ENCODE measurements at regions of chr1 and their contacts with region 1.

Region 1: DNA sequence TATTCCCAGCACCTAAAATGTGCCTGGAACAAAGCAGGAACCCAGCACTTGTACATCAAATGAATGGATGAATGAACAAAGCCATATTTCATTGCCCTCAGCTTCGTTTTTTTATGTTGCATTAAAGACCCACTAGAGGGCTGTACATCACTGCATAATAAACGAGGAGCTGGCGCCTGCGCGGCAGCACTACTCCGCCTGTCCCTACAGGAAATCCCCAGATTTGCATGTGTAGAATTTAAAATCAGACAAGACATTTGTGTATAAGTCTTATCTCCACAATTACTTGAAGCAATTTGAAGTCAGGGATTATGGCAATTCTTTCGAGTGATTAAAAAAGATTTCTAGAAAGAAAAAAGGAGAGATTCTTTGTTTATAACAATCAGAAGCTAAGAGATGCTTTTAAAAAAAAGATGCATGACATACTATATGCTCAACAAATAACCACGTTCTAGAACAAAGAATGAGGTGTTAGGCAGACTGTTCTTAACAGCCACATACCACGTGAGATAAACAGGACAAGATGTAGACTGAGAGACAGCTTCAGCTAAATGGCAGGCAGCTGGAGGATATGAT is 5.4 kb upstream of the NEK2 start:
- DNase-seq: peak; percentile 57 to 85 (median 80)
- H3K4me3 ChIP-seq: peak overlapping the region in 4 of 59 donors; percentile 2 to 20 (median 15)
- H3K27ac ChIP-seq: peak overlapping the region in 38 of 59 donors; percentile 1 to 85 (median 48)
- H3K27me3 ChIP-seq: no peaks in the 10 kb centered on the region
- CTCF ChIP-seq: peak; percentile 67 to 95 (median 85)

Region 2: DNA sequence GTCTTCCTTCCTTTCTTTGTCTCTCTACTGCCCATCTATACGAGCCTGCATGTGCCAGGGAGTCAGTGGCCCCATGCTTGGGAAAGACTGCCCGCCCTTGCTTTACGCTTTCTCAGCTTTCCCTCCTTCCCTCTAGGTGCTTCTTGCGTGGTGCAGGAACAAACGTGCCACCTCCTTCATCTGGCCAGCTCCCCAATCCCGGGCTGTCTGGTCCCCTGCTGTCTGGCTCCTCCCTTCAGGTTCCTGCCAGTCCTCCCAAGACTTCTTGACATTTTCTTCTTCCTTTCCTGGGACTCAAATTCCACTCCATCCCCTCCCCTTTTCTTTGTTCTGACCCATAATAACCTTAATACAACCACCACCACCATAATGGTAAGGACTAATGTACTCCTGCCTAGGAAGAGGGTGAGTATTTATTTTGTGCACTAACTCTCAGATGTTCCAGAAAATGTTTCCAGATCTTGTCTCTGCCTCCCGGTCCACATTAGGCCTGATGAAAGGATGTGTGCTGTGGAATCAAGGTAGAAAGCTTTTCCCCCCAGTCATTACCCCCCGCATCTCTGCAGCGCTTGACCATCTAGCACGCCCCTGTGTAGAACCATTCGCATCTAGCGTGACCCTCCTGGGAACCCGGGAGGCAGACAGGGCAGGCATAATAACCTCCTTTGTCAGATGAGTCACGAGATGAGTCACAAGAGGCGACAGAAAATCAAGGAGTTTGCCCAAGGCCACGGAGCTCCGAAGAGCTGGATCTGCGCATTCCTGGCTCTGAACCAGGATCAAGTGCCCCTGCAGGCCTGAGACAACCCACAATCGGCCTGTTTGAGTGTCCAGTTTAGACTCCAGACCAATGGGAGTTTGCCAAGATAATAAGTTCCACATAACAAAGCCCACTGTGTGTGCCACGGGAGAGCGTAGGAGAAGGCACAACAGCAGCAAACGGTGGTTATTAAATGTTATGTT is 54.6 kb after region 1 on chr1:
- intact Hi-C with region 1: no loop called
- DNase-seq: peak in 9 of 10 donors; percentile 61 to 84 (median 79)
- H3K4me3 ChIP-seq: peak overlapping the region in 2 of 59 donors; percentile 4 to 21
- H3K27ac ChIP-seq: peak overlapping the region; percentile 78 to 100 (median 97)
- H3K27me3 ChIP-seq: no peaks in the 10 kb centered on the region
- CTCF ChIP-seq: peak in 2 of 56 donors; percentile 3 to 18

Region 3: DNA sequence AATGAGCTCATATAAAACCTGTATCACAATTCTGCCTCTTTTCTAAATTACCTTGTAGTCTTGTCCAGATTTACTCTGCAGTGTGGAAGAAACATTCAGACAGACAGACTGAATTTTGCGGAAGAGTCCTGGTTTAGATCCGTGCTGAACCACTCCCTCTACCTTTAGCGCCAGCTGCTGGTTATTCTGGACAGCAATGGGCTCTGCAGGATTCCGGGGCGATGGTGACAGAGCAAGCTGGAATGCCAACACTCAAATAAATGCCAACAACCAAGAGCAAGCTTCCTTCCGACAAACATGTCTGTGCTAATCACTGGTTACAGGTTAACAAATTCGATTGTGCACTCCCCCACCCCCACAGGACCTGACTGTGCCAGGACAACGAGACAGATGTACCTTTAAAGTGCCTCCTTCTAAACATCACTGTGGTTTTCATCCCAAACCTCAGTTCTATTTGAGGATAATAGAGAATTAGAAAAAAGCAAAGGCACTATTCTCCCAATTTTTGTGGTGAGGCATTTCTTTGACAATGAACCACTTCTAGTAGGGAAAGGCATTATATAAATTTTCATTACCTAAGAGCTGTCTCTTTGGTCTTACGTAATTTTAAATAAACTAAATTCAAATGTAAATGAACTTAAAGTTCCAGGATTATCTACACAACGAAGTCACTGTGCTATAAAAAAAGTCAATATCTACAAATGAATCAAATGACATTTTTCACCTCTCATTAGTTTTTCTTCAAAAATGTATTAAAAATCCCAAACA is 264.1 kb after region 1 on chr1:
- intact Hi-C with region 1: loop called in 1 of 2 experiments (anchors 10 kb)
- DNase-seq: peak in 1 of 10 donors; percentile 41
- H3K4me3 ChIP-seq: no peak overlapping the region
- H3K27ac ChIP-seq: no peak overlapping the region
- H3K27me3 ChIP-seq: no peaks in the 10 kb centered on the region
- CTCF ChIP-seq: peak in 17 of 56 donors; percentile 6 to 34 (median 17)

Region 4: DNA sequence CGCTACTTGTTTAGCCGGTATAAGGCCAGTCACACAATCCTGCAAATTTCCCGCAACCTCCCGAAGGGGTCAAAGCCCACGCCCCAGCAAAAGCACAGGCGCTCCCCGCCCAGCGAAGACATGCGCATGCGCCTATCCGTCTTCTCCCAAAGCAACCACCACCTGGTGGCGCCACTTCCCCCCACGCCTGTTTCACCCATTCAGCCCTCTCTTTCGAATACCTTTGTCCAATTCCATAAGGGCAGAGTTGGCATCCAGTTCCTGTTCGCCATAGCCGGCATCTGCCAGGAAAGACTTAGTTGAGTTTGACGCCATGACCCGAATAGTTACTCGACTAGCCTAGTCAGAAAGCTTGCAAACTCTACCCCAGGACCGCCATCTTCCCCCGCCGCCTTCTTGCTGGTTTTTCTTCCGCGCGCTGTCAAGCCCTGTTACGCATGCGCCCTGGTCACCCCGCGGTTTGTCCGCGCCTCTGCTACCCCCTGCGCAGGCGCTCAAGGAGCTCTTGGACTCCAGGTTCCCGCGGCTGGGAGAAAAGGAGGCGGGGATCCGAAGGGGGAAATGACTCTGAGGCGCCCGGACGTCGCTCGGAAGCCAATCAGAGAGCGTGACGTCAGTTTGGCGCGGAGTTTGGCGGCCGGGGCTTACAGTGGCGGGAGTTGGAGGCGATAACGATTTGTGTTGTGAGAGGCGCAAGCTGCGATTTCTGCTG is 354.4 kb after region 1 on chr1 and contains the starts of genes DTL and INTS7:
- intact Hi-C with region 1: loop called (anchors 2 to 5 kb)
- DNase-seq: peak; percentile 94 to 98 (median 97)
- H3K4me3 ChIP-seq: peak within 1 kb of the TSS; percentile 41 to 91 (median 71)
- H3K27ac ChIP-seq: peak within 1 kb of the TSS; percentile 74 to 99 (median 95)
- H3K27me3 ChIP-seq: peaks cover 0 to 8% (median 0%) of the 10 kb centered on the region in 45 donors
- CTCF ChIP-seq: peak; percentile 75 to 99 (median 92)
- total RNA-seq, gene DTL: 0.11 to 3.4 (median 0.62) TPM in 96 of 120 experiments, not detected in the others
- total RNA-seq, gene INTS7: 9.6 to 23.7 (median 16.5) TPM